WTC11 (cell line): ENCODE measurements at regions of chr4 and their contacts with region 1.

Region 1: GRCh38 chr4:151801547-151802516 is 41.0 kb upstream of the GATB start:
- DNase-seq: peak; percentile 72
- ATAC-seq: peak; percentile 80
- H3K4me3 Mint-ChIP-seq: no peak overlapping the region
- H3K27ac Mint-ChIP-seq: no peak overlapping the region
- H3K4me1 Mint-ChIP-seq: peaks cover 35% of the 10 kb centered on the region
- H3K27me3 Mint-ChIP-seq: peaks cover 4% of the 10 kb centered on the region; the same call in 1 of the 2 replicates
- CTCF ChIP-seq: peak; percentile 90

Region 2: DNA sequence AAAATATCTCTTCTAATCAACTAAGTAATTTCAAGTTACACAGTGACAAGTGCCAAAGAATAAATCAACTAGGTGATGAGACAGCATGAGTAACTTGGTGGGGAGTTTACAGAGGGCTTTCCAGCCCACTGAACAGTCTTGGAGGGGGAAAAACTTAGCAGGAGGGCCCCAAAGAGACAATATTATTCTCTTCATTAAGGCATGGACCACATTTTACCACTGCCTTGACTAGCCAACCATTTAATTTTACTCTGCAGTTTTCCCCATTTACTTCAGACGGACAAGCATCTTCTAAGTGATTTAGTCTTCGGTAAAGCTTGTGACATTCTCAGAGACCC is 15.7 kb before region 1 on chr4:
- CTCF ChIA-PET with region 1: interaction called, 26 read pairs
- POLR2A ChIA-PET with region 1: no interaction called
- DNase-seq: no peak
- ATAC-seq: no peak
- H3K4me3 Mint-ChIP-seq: no peak overlapping the region
- H3K27ac Mint-ChIP-seq: no peak overlapping the region
- H3K4me1 Mint-ChIP-seq: peaks cover 42% of the 10 kb centered on the region
- H3K27me3 Mint-ChIP-seq: peaks cover 58% of the 10 kb centered on the region
- CTCF ChIP-seq: no peak